ENCODE measurements at regions of chrX and their contacts with region 1.

Region 1: GRCh38 chrX:129318375-129318774 is 204.9 kb downstream of the SMARCA1 start:
- DNase-seq: peak; percentile 31
- H3K4me3 Mint-ChIP-seq: no peak overlapping the region
- H3K27ac Mint-ChIP-seq: no peak overlapping the region
- H3K4me1 Mint-ChIP-seq: no peaks in the 10 kb centered on the region
- H3K27me3 Mint-ChIP-seq: no peaks in the 10 kb centered on the region

Region 2: GRCh38 chrX:128848374-128848773 is 470.0 kb before region 1 on chrX:
- CTCF ChIA-PET with region 1: no interaction called
- intact Hi-C with region 1: no loop called
- DNase-seq: no peak
- H3K4me3 Mint-ChIP-seq: no peak overlapping the region
- H3K27ac Mint-ChIP-seq: no peak overlapping the region
- H3K4me1 Mint-ChIP-seq: no peaks in the 10 kb centered on the region
- H3K27me3 Mint-ChIP-seq: no peaks in the 10 kb centered on the region

Region 3: DNA sequence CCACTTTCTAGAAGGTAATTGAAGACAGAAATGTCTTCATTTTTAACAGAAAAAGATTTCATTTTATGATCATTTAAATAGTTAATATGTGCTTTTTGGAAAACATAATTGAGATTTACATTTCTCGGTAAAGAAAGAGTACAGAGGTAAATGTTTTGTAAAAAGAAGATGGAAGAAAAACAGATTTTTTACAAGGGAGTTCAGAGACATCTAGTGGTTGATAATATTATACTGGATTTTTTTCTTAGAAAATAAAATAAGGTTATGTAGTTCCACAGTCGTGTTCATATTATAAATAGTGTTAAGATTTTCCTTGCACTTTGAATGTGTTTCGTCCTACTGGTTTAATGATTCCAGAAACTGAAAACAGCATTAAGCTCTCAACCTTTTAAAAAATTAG is 144.3 kb after region 1 on chrX:
- CTCF ChIA-PET with region 1: no interaction called
- intact Hi-C with region 1: loop called (anchors 10 kb)
- DNase-seq: no peak
- H3K4me3 Mint-ChIP-seq: no peak overlapping the region
- H3K27ac Mint-ChIP-seq: no peak overlapping the region
- H3K4me1 Mint-ChIP-seq: no peaks in the 10 kb centered on the region
- H3K27me3 Mint-ChIP-seq: no peaks in the 10 kb centered on the region

Region 4: DNA sequence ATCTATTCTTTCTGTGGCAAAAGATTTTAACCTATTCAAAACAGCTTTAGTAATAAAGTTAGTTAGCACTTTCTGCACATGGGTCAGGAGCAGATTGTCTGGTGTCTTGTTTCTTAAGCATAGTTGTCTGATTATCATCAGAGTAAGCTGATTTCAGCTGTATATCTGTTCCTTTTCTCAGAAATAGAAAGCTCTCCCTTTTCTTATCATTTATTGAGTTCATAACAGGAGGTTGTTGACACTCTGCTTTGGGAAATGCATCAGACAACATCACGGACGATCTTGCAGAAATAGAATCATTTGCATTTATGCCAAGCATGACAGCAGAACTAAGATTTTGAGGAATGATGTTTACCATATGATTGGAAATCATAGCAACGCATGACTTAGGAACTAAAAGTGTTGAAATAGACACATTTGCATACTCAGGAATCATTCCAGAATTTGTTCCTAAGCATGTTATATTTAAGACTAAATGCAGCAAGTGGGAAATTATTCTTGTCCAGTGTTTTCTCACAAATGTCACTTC is 1150.1 kb after region 1 on chrX:
- CTCF ChIA-PET with region 1: no interaction called
- intact Hi-C with region 1: no loop called
- DNase-seq: no peak
- H3K4me3 Mint-ChIP-seq: no peak overlapping the region
- H3K27ac Mint-ChIP-seq: no peak overlapping the region
- H3K4me1 Mint-ChIP-seq: no peaks in the 10 kb centered on the region
- H3K27me3 Mint-ChIP-seq: no peaks in the 10 kb centered on the region